ENCODE measurements at regions of chr11 and their contacts with region 1.

Region 1: DNA sequence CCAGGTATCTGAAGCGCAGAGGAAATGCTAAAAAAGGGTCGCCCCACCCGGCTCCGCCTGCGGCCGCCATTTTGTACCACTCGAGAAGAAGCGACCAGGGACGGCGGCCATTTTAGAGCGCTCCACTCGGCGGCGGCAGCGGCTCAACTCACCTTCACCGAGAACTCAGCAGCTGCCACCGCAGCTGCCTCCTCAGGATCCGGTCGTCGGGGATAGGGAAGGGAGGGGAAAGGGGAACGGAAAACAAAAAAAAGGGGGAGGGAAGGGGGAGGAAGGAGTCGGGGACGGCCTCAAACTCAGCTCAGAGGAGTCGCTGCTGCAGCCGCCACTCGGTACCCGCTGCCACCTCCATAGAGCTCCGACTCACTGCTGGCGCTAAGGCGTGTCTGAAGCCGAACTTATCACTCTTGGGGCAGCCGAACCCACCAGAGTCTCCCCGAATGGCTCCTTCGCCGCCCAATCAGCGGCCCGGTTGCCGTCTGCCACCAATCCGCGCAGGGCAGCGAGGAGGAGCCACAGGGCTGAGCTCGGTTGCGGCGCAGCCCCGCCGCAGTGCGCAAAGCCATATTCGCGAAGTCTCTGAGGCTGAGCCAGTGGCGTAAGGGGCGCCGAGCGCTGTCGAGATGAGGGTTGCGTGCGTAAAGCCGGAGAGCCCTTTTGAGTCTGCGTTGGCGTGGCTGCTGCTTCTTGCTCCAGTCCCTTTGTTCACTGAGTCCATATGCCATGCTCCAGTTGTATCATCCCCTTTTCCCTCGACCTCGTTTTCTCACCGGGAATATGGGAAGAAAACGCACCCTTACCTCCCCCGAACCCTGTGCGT is at the start of gene EIF4G2:
- DNase-seq: peak; percentile 98
- H3K4me3 Mint-ChIP-seq: peak within 1 kb of the TSS; percentile 94
- H3K27ac Mint-ChIP-seq: peak within 1 kb of the TSS; percentile 98
- H3K4me1 Mint-ChIP-seq: peaks cover 45% of the 10 kb centered on the region
- H3K27me3 Mint-ChIP-seq: peaks cover 2% of the 10 kb centered on the region
- total RNA-seq, gene EIF4G2: 548 to 594 TPM

Region 2: DNA sequence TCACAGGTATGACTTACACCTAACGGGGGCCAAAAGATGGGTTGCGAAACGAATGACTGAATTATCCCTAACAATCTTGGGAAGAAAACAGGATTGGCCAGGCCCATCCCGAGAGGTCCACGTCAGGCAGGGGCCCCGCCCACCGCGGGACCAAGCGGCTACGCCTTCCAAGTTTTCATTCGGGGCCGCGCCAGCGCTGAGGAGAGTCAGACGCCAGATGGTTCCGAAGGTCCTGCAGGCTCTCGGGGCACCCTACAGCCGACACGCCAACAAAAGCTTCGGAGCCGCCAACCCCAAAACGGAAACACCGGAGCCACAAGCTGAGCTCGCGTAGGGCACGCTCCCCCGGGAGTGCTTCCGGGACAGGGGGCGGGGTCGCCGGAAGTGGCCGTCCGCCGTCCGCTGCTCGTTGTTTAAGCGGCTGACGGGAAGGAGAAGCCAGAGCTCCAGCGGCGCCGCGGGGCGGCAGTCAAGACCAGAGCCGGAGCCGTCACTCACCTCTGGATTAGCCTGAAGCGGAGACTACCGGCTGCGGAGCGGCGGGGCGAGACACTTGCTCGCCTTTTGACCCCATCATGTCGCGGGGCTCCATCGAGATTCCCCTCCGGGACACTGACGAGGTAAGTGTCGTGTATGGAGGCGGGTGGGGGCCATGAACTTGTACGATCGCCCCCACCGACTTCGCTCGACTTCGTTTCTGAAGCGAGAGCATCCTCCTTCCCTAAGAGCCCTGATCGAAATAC is 57.8 kb before region 1 on chr11 and contains the start of gene CTR9:
- CTCF ChIA-PET with region 1: interaction called, 8 read pairs
- POLR2A ChIA-PET with region 1: interaction called, 29 read pairs
- DNase-seq: peak; percentile 94
- H3K4me3 Mint-ChIP-seq: peak within 1 kb of the TSS; percentile 91
- H3K27ac Mint-ChIP-seq: peak within 1 kb of the TSS; percentile 88
- H3K4me1 Mint-ChIP-seq: peaks cover 32% of the 10 kb centered on the region
- H3K27me3 Mint-ChIP-seq: no peaks in the 10 kb centered on the region
- total RNA-seq, gene CTR9: 48.4 to 54.5 TPM

Region 3: GRCh38 chr11:10792398-10792975 is 16.3 kb before region 1 on chr11:
- CTCF ChIA-PET with region 1: interaction called, 57 read pairs
- POLR2A ChIA-PET with region 1: interaction called, 111 read pairs
- DNase-seq: peak; percentile 86
- H3K4me3 Mint-ChIP-seq: no peak overlapping the region
- H3K27ac Mint-ChIP-seq: no peak overlapping the region
- H3K4me1 Mint-ChIP-seq: peaks cover 25% of the 10 kb centered on the region
- H3K27me3 Mint-ChIP-seq: peaks cover 5% of the 10 kb centered on the region

Region 4: GRCh38 chr11:10824888-10825287 is 16.1 kb after region 1 on chr11:
- CTCF ChIA-PET with region 1: no interaction called
- POLR2A ChIA-PET with region 1: interaction called, 18 read pairs
- DNase-seq: no peak
- H3K4me3 Mint-ChIP-seq: no peak overlapping the region
- H3K27ac Mint-ChIP-seq: no peak overlapping the region
- H3K4me1 Mint-ChIP-seq: peaks cover 2% of the 10 kb centered on the region
- H3K27me3 Mint-ChIP-seq: no peaks in the 10 kb centered on the region

Region 5: GRCh38 chr11:10847960-10848870 is 39.5 kb after region 1 on chr11:
- CTCF ChIA-PET with region 1: interaction called, 3 read pairs
- POLR2A ChIA-PET with region 1: interaction called, 379 read pairs
- DNase-seq: no peak
- H3K4me3 Mint-ChIP-seq: no peak overlapping the region
- H3K27ac Mint-ChIP-seq: no peak overlapping the region
- H3K4me1 Mint-ChIP-seq: peaks cover 3% of the 10 kb centered on the region
- H3K27me3 Mint-ChIP-seq: no peaks in the 10 kb centered on the region

Region 6: GRCh38 chr11:10969387-10969786 is 160.6 kb after region 1 on chr11:
- CTCF ChIA-PET with region 1: no interaction called
- POLR2A ChIA-PET with region 1: no interaction called
- DNase-seq: no peak
- H3K4me3 Mint-ChIP-seq: no peak overlapping the region
- H3K27ac Mint-ChIP-seq: no peak overlapping the region
- H3K4me1 Mint-ChIP-seq: no peaks in the 10 kb centered on the region
- H3K27me3 Mint-ChIP-seq: peaks cover 16% of the 10 kb centered on the region

Region 7: GRCh38 chr11:10982704-10983510 is 174.1 kb after region 1 on chr11:
- CTCF ChIA-PET with region 1: no interaction called
- POLR2A ChIA-PET with region 1: no interaction called
- DNase-seq: no peak
- H3K4me3 Mint-ChIP-seq: no peak overlapping the region
- H3K27ac Mint-ChIP-seq: no peak overlapping the region
- H3K4me1 Mint-ChIP-seq: peaks cover 12% of the 10 kb centered on the region
- H3K27me3 Mint-ChIP-seq: peaks cover 20% of the 10 kb centered on the region

Region 8: GRCh38 chr11:11841723-11842420 is 1033.1 kb after region 1 on chr11 and contains the start of gene USP47:
- CTCF ChIA-PET with region 1: no interaction called
- POLR2A ChIA-PET with region 1: interaction called, 31 read pairs
- DNase-seq: peak; percentile 94
- H3K4me3 Mint-ChIP-seq: no peak within 1 kb of the TSS
- H3K27ac Mint-ChIP-seq: peak within 1 kb of the TSS; percentile 51
- H3K4me1 Mint-ChIP-seq: peaks cover 7% of the 10 kb centered on the region
- H3K27me3 Mint-ChIP-seq: peaks cover 18% of the 10 kb centered on the region
- total RNA-seq, gene USP47: 38.9 to 41.7 TPM